HAP-1 (cell line): ENCODE measurements at regions of chr3 and their contacts with region 1.

Region 1: GRCh38 chr3:79973917-79974595 is 206.3 kb upstream of the ROBO1 start:
- DNase-seq: no peak
- H3K4me3 ChIP-seq: no peak overlapping the region
- H3K4me1 ChIP-seq: peaks cover 6% of the 10 kb centered on the region
- H3K27me3 ChIP-seq: no peaks in the 10 kb centered on the region

Region 2: GRCh38 chr3:80060664-80061063 is 86.6 kb after region 1 on chr3:
- in situ Hi-C with region 1: loop called (anchors 25 kb)
- DNase-seq: no peak
- H3K4me3 ChIP-seq: no peak overlapping the region
- H3K4me1 ChIP-seq: peaks cover 5% of the 10 kb centered on the region
- H3K27me3 ChIP-seq: no peaks in the 10 kb centered on the region

Region 3: DNA sequence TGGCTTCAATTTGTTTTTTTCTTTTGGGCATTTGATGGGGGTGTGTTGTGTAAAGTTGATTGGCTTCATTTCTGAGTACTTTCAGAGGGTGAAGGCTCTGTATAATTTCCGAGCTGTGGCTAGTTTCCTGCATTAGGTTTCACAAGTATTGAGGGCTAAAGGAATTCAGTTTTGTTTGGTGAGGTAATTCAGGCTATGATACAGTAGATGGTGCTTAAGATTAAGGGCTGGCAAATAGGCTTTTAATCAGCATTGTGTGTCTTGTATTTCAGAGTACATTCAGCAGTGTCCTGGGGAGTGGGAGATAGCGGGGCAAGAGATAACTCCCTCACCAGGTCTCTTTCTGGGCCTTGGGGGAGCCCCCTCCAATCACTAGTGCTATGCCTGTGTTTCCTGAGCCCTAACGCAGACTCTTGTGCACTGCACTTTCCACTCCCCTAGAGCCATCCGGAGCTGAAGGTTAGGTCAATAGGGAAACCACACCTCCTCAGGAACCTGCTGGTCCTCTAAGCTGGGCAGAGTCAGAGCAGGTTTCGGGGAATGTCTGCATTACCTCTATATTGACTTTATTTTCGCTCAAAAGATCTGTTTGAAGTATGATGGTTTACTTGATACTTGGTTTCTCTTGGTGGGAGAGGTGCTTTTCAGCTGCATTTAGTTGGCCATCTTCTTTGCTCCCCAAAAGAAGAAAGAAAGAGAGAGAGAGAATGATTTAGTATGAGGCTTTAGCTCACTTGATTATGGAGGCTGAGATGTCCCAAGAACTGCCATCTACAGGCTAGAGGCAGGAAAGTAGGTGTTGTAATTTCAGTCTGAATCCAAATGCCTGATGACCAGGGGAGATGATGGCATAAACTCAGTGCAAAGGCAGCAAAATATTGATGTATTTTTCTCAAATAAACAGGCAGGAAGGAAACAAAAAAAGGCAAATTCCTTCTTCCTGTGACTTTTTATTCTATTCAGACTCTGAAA is 410.8 kb after region 1 on chr3:
- in situ Hi-C with region 1: no loop called
- DNase-seq: no peak
- H3K4me3 ChIP-seq: no peak overlapping the region
- H3K4me1 ChIP-seq: no peaks in the 10 kb centered on the region
- H3K27me3 ChIP-seq: no peaks in the 10 kb centered on the region